GM10248 (cell line): ENCODE measurements at regions of chr19 and their contacts with region 1.

Region 1: DNA sequence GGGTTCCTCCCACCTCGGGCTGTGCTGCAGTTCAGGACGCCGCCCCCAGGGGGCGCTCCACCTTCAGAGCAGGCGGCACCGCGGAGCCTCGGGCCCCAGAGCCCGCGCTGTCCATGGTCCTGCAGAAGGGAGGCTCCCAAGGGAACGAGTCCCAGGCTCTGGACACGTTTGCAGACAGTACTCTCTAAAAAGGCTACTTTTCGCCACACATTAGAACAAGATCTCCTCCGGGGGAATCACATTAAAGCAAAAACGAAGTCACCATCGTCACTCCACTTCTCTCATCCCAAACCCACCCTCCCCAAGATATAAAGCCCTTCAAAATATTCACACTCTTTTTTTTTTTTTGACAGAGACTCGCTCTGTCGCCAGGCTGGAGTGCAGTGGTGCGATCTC is 4.6 kb upstream of the SIGLEC10 start:
- DNase-seq: peak; percentile 89
- CTCF ChIP-seq: peak; percentile 99

Region 2: DNA sequence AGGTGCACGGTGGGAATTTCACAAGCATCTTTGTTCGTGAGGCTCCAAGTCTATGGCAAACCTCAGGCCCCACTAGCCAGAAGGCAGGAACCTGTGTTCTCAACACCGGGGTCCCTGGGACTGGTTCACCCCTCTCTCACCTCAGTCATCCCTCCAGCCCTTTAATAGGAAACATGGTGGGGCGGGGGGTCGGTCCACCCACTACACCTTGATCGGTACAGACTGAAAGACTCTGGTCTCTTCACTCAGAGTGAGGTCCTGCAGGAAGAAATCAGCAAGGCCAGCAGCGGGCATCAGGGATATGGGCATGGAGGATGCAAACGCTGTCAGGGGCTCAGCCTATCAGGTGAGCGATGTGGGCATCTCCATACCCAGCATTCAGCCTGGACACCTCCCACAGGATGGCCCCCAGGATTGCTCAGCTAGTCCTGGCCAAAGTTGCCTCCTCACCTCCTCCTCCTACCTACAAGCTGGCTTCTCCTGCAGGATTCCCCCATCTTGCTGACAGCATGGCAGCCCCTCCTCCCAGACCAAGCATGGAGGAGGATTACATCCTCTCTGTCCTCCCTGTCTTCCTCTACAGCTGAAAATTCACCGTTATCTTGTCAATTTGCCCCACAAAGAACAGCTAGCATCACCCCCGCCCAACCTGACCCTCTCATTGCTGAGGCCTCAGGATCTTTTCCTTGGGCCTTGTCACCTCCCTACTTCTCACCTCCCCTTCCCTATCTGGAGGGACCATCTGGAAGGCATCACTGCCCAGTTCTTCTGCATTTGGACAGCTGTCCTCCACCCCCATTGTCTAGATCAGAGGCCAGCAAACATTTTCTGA is 234.4 kb before region 1 on chr19:
- CTCF ChIA-PET with region 1: no interaction called
- POLR2A ChIA-PET with region 1: no interaction called
- DNase-seq: no peak
- CTCF ChIP-seq: no peak

Region 3: DNA sequence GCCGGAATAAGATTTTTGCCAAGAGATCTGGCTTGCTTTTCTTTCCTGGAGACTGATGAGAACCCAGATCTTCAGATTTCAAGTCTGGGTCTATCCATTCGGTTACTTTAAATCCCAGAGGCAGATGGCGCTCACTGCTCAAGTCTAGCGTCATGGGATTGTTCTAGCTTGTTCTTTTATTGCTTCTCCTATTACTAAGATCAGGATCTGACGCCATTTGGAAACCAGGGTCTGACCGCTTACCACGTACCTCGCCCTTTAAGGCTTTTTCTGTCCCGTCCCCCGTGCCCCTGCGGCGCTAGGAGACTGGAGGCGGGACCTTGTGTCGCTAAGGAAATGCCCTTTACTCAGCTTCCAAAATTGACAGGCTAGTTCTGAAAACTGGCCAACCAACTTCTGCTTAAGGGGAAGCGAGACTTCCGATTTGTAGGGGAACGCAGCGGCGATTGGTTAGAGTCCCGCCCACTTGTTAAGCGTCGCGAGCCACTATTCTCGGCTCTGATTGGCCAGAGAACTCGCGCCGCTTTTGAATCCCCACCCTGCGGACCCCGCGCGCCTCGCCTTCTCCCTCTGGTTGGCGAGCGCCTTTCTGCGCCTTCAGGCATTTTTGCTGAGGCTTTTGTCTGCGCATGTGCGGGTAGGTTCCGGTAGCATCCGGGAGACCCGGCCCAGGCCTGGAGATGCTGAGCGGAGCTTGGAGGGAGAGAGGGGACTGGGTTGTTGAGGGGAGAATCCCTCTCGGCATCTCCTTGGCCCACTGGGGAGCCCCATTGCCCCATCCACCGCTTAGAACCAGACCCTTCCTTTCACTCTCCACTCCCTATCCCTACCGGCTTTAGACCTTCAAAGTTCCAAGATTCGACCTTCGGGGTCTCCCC is 27.9 kb before region 1 on chr19:
- CTCF ChIA-PET with region 1: interaction called, 168 read pairs
- POLR2A ChIA-PET with region 1: interaction called, 5 read pairs
- DNase-seq: peak; percentile 94
- CTCF ChIP-seq: peak; percentile 4

Region 4: GRCh38 chr19:51441410-51442390 is 19.6 kb after region 1 on chr19:
- CTCF ChIA-PET with region 1: interaction called, 109 read pairs
- POLR2A ChIA-PET with region 1: no interaction called
- DNase-seq: peak; percentile 78
- CTCF ChIP-seq: no peak

Region 5: GRCh38 chr19:51607920-51608562 is 186.0 kb after region 1 on chr19:
- CTCF ChIA-PET with region 1: interaction called, 12 read pairs
- POLR2A ChIA-PET with region 1: no interaction called
- DNase-seq: peak; percentile 54
- CTCF ChIP-seq: peak; percentile 74